Left cardiac atrium (tissue), 4 donors: ENCODE measurements at regions of chr16 and their contacts with region 1.

Region 1: GRCh38 chr16:84913315-84913714 is 93.5 kb downstream of the CRISPLD2 start:
- DNase-seq: peak; percentile 41
- ATAC-seq: peak; percentile 59 to 74

Region 2: GRCh38 chr16:84836234-84836647 is 77.1 kb before region 1 on chr16:
- intact Hi-C with region 1: loop called in 1 of 2 experiments (anchors 10 kb)
- DNase-seq: peak; percentile 86
- ATAC-seq: peak; percentile 83

Region 3: DNA sequence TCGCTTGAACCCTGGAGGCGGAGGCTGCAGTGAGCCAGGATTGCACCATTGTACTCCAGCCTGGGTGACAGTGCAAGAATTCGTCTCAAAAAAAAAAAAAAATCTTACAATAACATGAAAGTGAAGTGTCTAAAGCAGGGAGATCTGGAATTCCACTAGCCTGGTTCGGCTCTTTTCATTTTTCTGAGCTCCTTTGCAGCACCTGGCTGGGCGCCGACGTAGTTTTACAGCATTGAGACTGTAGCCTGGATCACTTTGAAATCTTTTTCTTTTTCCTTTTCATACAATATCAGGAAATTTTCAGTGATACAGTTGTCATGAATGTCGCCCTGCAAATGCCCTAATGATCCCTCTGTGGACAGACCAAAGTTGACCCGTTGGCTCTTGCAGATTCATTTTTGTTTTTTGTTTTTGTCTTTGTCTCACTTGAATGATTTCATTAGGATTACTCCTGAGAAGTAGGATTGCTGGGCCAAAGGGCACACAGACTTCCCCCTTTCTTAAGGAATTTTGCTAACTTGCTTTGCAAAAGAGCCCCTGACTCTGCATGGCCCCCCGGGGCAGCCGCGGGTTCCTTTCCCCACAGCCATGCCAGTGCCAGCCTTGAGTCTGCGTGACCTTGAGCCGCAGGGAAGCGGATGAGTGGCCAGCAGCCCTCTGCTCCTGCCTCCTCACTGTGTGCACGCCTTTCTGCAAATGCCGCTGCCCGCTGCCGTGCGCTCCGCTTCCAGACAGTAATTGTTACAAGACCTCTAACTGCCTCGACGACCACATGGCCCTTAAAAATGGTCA is 65.6 kb before region 1 on chr16:
- intact Hi-C with region 1: no loop called
- DNase-seq: no peak
- ATAC-seq: no peak

Region 4: DNA sequence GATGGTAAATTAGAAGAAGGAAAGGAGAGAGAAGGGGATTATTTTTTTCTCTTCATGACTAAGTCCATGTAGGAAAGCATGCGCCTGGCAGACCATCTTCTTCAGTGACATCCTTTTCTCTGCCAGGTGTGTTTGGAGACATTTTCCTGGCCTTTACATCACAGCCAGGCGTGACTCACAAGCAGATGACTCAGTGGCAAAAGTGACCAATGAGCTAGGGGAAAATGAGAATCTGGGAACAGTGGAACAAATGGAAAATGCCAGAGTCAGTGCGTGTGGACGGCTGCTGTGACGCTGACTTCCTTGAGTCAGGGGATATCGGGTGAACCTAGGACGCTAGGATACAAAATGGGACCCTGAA is 123.7 kb after region 1 on chr16:
- intact Hi-C with region 1: no loop called
- DNase-seq: no peak
- ATAC-seq: no peak

Region 5: DNA sequence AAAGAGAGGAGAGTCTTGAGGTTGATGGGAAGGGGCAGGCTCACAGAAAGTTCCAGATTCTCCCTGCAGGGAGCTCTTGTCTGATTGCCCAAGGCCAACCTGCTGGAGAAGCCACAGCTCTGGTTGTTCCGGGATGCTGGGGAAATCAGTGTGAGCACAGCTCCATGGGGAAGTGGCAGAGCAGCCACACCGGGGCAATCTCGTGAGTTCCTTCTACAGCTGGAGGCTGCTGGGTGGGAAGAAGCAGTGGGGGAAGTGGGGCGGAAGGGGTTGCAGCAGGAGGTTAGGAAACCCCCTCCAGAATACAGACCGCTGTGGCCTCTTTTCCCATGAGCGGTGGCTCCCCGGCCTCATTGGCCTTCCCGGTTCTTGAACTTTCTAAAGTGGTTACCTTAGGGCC is 148.3 kb after region 1 on chr16:
- intact Hi-C with region 1: no loop called
- DNase-seq: peak; percentile 49
- ATAC-seq: peak; percentile 40 to 46